ENCODE measurements at regions of chr2 and their contacts with region 1.

Region 1: DNA sequence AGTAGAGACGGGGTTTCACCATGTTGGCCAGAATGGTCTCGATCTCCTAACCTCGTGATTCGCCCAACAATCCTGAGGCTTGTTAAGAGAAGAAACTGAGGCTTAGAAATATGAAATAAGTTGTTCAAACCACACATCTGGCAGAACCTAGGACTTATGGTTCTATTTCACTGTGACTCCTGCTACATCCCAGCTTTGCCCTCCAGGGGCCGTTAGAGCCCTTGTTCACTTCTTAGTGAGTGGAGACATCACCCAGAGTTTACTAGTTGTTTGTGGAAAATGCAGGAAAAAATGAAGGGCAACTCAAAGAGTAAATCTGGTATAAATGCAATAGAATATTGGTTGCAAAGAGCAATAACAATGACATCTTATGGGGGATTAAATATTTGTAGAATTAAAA is 43.9 kb downstream of the MARCHF4 start:
- DNase-seq: peak; percentile 17
- ATAC-seq: peak; percentile 61; the same call in 1 of the 2 replicates
- H3K4me3 Mint-ChIP-seq: no peak overlapping the region
- H3K27ac Mint-ChIP-seq: no peak overlapping the region
- H3K4me1 Mint-ChIP-seq: peaks cover 5% of the 10 kb centered on the region
- H3K27me3 Mint-ChIP-seq: no peaks in the 10 kb centered on the region
- CTCF ChIP-seq: no peak

Region 2: GRCh38 chr2:216371756-216372702 is 43.7 kb after region 1 on chr2 and contains the start of gene MARCHF4:
- CTCF ChIA-PET with region 1: interaction called, 10 read pairs
- POLR2A ChIA-PET with region 1: no interaction called
- DNase-seq: peak; percentile 87
- ATAC-seq: peak; percentile 67
- H3K4me3 Mint-ChIP-seq: peak within 1 kb of the TSS; percentile 86
- H3K27ac Mint-ChIP-seq: no peak within 1 kb of the TSS
- H3K4me1 Mint-ChIP-seq: peaks cover 30% of the 10 kb centered on the region
- H3K27me3 Mint-ChIP-seq: peaks cover 59% of the 10 kb centered on the region
- CTCF ChIP-seq: no peak
- total RNA-seq, gene MARCHF4: 1.7 to 2.6 TPM (median 1.7 TPM) in 3 replicates

Region 3: DNA sequence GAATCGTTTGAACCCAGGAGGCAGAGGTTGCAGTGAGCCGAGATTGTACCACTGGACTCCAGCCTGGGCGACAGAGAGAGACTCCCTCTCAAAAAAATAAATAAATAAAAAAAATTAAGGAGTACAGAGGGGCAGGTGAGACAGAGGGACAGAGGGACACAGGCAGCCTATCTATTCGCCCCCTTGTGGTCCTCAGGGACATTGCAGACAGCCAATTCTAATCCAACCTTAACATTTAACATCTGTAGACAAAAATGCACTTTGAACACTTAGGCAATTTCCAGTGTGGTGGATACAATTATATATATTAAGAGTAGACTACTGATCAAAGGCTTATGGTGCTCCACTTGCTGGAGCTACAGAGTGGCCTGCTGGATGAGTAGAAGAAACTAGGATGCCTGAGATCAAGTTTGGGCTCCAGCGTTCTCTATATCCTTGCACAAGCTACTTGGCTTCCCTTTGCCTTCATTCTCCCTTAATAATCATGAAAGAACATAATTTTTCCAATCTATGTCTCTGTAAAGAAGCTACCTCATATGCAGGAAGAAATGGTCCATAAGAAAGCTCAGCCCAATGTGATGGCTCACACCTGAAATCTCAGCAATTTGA is 75.8 kb after region 1 on chr2:
- CTCF ChIA-PET with region 1: interaction called, 13 read pairs
- POLR2A ChIA-PET with region 1: no interaction called
- DNase-seq: peak; percentile 56
- ATAC-seq: peak; percentile 60
- H3K4me3 Mint-ChIP-seq: no peak overlapping the region
- H3K27ac Mint-ChIP-seq: no peak overlapping the region
- H3K4me1 Mint-ChIP-seq: peaks cover 28% of the 10 kb centered on the region
- H3K27me3 Mint-ChIP-seq: no peaks in the 10 kb centered on the region; the same call in 1 of the 2 replicates
- CTCF ChIP-seq: peak; percentile 94